ENCODE measurements at regions of chrX and their contacts with region 1.

Region 1: GRCh38 chrX:18390941-18391538 is 34.4 kb upstream of the CDKL5 start:
- DNase-seq: peak; percentile 56
- CTCF ChIP-seq: peak; percentile 70

Region 2: GRCh38 chrX:18002791-18003190 is 388.2 kb before region 1 on chrX:
- in situ Hi-C with region 1: no loop called
- DNase-seq: no peak
- CTCF ChIP-seq: no peak

Region 3: GRCh38 chrX:19017271-19017670 is 626.2 kb after region 1 on chrX:
- in situ Hi-C with region 1: loop called (anchors 25 kb)
- DNase-seq: peak; percentile 46
- CTCF ChIP-seq: peak; percentile 36